ENCODE measurements at regions of chr15 and their contacts with region 1.

Region 1: GRCh38 chr15:84658080-84658787 is at the start of gene NMB:
- DNase-seq: peak; percentile 81
- ATAC-seq: peak; percentile 85
- H3K4me3 ChIP-seq: peak within 1 kb of the TSS; percentile 52 to 75 (median 57)
- H3K27ac ChIP-seq: peak within 1 kb of the TSS; percentile 78
- H3K4me1 ChIP-seq: peaks cover 52% of the 10 kb centered on the region
- H3K27me3 ChIP-seq: no peaks in the 10 kb centered on the region; a peak in 1 of 5 replicates
- CTCF ChIP-seq: peak; percentile 80
- EP300 ChIP-seq: no peak
- POLR2A ChIP-seq: peak; percentile 54 to 67
- RAD21 ChIP-seq: peak; percentile 84
- total RNA-seq, gene NMB: 15.5 and 25.4 TPM in 2 replicates

Region 2: GRCh38 chr15:83653639-83654378 is 1004.4 kb before region 1 on chr15 and contains the start of gene ADAMTSL3:
- CTCF ChIA-PET with region 1: no interaction called
- POLR2A ChIA-PET with region 1: no interaction called
- in situ Hi-C with region 1: no loop called
- intact Hi-C with region 1: no loop called
- DNase-seq: no peak
- ATAC-seq: peak; percentile 55
- H3K4me3 ChIP-seq: no peak within 1 kb of the TSS
- H3K27ac ChIP-seq: no peak within 1 kb of the TSS
- H3K4me1 ChIP-seq: peaks cover 32% of the 10 kb centered on the region
- H3K27me3 ChIP-seq: peaks cover 0 to 18% of the 10 kb centered on the region in 2 experiments; a peak in 4 of 5 replicates
- CTCF ChIP-seq: no peak
- EP300 ChIP-seq: no peak
- POLR2A ChIP-seq: no peak
- RAD21 ChIP-seq: no peak
- total RNA-seq, gene ADAMTSL3: 0.09 TPM in 1 of 2 replicates, not detected in the other

Region 3: GRCh38 chr15:84588053-84588874 is 70.0 kb before region 1 on chr15:
- CTCF ChIA-PET with region 1: interaction called, 4 read pairs
- POLR2A ChIA-PET with region 1: interaction called, 7 read pairs
- in situ Hi-C with region 1: loop called (anchors 5 kb)
- intact Hi-C with region 1: no loop called
- DNase-seq: peak; percentile 83
- ATAC-seq: peak; percentile 100
- H3K4me3 ChIP-seq: peak overlapping the region; percentile 41 to 62 (median 50)
- H3K27ac ChIP-seq: no peak overlapping the region
- H3K4me1 ChIP-seq: peaks cover 27% of the 10 kb centered on the region
- H3K27me3 ChIP-seq: no peaks in the 10 kb centered on the region; a peak in 2 of 5 replicates
- CTCF ChIP-seq: peak; percentile 89
- EP300 ChIP-seq: no peak
- POLR2A ChIP-seq: no peak
- RAD21 ChIP-seq: peak; percentile 93

Region 4: GRCh38 chr15:84606653-84607120 is 51.5 kb before region 1 on chr15:
- CTCF ChIA-PET with region 1: no interaction called
- POLR2A ChIA-PET with region 1: interaction called, 27 read pairs
- in situ Hi-C with region 1: no loop called
- intact Hi-C with region 1: no loop called
- DNase-seq: peak; percentile 99
- ATAC-seq: peak; percentile 96
- H3K4me3 ChIP-seq: peak overlapping the region in 2 of 3 experiments; percentile 31 to 47; a peak in 3 of 6 replicates
- H3K27ac ChIP-seq: peak overlapping the region; percentile 87
- H3K4me1 ChIP-seq: peaks cover 84% of the 10 kb centered on the region
- H3K27me3 ChIP-seq: no peaks in the 10 kb centered on the region
- CTCF ChIP-seq: no peak
- EP300 ChIP-seq: peak; percentile 38 to 95; a peak in 2 of 4 replicates
- POLR2A ChIP-seq: peak in 1 of 2 experiments; percentile 29; a peak in 1 of 4 replicates
- RAD21 ChIP-seq: 0 out of 2 replicates have a peak, but pooled peaks have one; percentile 25

Region 5: GRCh38 chr15:84645496-84645895 is 12.7 kb before region 1 on chr15:
- CTCF ChIA-PET with region 1: no interaction called
- POLR2A ChIA-PET with region 1: interaction called, 45 read pairs
- in situ Hi-C with region 1: no loop called
- intact Hi-C with region 1: no loop called
- DNase-seq: no peak
- ATAC-seq: no peak; the same call in 2 of the 3 replicates
- H3K4me3 ChIP-seq: no peak overlapping the region
- H3K27ac ChIP-seq: no peak overlapping the region
- H3K4me1 ChIP-seq: peaks cover under 1% of the 10 kb centered on the region; the same call in 1 of the 2 replicates
- H3K27me3 ChIP-seq: no peaks in the 10 kb centered on the region
- CTCF ChIP-seq: no peak
- EP300 ChIP-seq: no peak
- POLR2A ChIP-seq: no peak
- RAD21 ChIP-seq: no peak

Region 6: DNA sequence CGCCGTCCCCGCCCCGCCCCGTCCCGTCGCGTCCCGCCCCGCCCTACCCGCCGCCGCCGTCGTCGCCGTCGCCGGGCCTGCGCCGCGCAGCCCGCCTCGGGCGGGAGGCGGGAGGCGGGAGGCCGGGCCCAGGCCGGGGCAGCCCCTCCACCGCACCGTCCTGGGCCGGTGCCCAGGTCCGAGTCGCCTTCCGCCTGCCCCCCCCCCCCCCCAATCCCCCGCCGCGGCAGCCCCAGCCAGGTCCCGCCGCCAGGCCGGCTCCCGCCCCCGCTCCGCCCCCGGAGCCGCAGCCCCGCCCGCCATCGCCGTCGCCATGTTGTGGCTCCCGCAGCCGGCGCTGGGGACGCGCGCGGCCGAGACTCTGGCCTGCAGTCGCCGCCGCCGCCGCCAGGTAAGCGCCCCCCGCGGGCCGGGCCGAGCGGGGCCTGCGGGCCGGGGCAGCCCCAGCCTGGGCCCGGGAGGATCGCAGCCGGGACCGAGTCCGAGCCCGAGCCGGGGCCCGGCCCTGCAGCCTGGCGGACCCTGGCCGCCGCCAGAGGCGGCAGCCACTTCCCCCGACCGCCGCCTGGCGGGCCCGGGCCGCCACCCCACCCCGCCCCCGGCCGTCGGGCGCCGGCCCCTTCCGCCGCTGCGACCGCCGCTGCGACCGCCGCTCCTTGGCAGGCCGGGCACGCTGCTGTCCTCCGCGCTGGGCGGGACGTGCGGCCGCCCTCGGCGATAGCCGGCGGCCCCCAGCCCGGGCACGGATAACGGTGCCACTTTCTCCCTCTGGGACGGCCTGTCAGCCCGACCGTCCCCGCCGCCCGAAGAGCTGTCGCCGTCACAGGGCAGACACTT is 90.3 kb after region 1 on chr15 and contains the start of gene ZNF592:
- CTCF ChIA-PET with region 1: no interaction called
- POLR2A ChIA-PET with region 1: interaction called, 3 read pairs
- in situ Hi-C with region 1: no loop called
- intact Hi-C with region 1: loop called (anchors 1 kb)
- DNase-seq: peak; percentile 36
- ATAC-seq: peak; percentile 64
- H3K4me3 ChIP-seq: peak within 1 kb of the TSS; percentile 75 to 95 (median 84)
- H3K27ac ChIP-seq: peak within 1 kb of the TSS; percentile 98
- H3K4me1 ChIP-seq: peaks cover 53% of the 10 kb centered on the region
- H3K27me3 ChIP-seq: no peaks in the 10 kb centered on the region; a peak in 2 of 5 replicates
- CTCF ChIP-seq: no peak
- EP300 ChIP-seq: no peak
- POLR2A ChIP-seq: peak; percentile 23 to 41
- RAD21 ChIP-seq: peak; percentile 48; the same call in 1 of the 2 replicates
- total RNA-seq, gene ZNF592: 8.2 and 8.6 TPM in 2 replicates

Region 7: GRCh38 chr15:84929744-84930371 is 271.6 kb after region 1 on chr15:
- CTCF ChIA-PET with region 1: interaction called, 4 read pairs
- POLR2A ChIA-PET with region 1: no interaction called
- in situ Hi-C with region 1: loop called (anchors 10 kb)
- intact Hi-C with region 1: loop called (anchors 2 kb)
- DNase-seq: peak; percentile 90
- ATAC-seq: peak; percentile 88
- H3K4me3 ChIP-seq: no peak overlapping the region
- H3K27ac ChIP-seq: peak overlapping the region; percentile 29
- H3K4me1 ChIP-seq: peaks cover 34% of the 10 kb centered on the region
- H3K27me3 ChIP-seq: no peaks in the 10 kb centered on the region
- CTCF ChIP-seq: no peak
- EP300 ChIP-seq: peak in 1 of 2 experiments; percentile 66; a peak in 2 of 4 replicates
- POLR2A ChIP-seq: no peak
- RAD21 ChIP-seq: no peak